Activated B cell treated with CpG ODN at 0.5 μM for 24 hours (primary cell): ENCODE measurements at regions of chr12 and their contacts with region 1.

Region 1: DNA sequence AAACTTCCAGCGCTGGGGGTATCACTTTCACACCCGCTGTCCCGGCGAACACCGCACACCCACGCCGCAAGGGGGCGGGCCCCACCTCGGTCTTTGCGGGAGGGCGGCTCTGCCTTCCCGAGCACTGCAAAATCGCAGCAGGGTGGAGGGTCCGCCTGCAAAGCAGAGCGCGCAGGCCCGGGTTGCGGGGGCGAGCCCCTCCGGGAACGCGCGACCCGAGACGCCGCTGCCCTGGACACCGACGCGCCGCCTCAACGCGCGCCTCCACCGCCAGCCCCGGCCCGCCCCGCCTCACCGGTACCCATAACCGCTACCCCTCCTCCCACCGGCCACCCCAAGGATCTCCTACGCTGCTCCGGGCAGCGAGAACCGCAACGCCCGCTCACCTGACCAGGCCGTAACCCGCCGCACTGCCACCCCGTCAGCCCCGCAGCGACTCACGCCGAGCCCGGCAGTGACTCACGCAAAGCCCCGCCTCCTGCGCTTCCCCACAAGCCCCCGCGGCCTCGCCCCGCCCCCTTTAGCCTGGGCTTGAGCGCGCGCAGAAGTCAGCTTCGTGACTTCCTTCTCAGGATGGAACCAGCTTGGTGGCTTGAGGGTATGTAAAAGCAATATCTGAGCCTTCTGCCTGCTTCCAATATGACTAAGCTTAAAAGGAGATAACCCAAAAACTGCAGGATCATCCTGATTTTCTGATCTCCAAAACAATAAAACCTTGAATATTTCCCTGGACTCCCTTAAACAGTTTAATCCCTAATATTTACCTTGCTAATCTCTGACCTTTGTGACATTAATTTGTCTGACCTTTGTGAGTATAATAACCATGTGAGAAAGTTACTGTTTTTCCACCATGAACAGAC is at the start of gene RPAP3:
- DNase-seq: peak; percentile 96
- ATAC-seq: peak; percentile 90
- H3K4me3 Mint-ChIP-seq: peak within 1 kb of the TSS; percentile 97
- H3K27ac Mint-ChIP-seq: peak within 1 kb of the TSS; percentile 98
- H3K4me1 Mint-ChIP-seq: peaks cover 76% of the 10 kb centered on the region
- H3K27me3 Mint-ChIP-seq: no peaks in the 10 kb centered on the region
- CTCF ChIP-seq: no peak
- total RNA-seq, gene RPAP3: 58.4 and 60.5 TPM in 2 replicates

Region 2: DNA sequence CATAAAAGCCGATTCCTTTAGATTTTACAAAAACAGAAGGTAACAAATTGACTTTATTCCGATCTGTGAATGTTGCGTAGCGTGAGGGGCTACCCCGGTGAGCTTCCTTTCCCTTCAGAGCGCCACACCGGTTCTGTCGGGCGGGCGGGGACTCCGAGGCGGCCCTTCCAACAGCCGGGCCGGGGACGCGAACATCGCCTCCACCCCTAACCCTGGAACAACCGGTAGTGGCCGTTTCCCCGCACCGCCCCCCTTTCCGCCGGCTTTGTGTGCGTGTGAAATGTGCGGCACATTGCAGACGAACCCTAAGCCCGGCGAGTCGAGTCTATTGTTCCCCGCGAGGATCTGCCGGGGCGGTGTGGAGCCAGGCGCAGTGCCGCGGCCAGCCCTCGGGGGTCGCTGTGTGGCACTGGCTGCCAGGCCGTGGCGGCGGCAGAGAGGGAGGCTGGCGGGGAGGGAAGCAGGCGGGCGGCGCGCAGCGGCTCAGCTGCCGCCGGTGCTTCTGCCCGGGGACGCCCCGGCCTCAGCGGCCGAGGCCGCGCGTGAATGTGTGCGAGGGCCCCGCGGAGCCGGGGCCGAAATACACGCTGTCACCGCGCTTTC is 1977.1 kb before region 1 on chr12:
- CTCF ChIA-PET with region 1: no interaction called
- POLR2A ChIA-PET with region 1: no interaction called
- intact Hi-C with region 1: loop called (anchors 5 kb)
- DNase-seq: peak; percentile 97
- ATAC-seq: peak; percentile 68
- H3K4me3 Mint-ChIP-seq: peak overlapping the region; percentile 92
- H3K27ac Mint-ChIP-seq: peak overlapping the region; percentile 99
- H3K4me1 Mint-ChIP-seq: peaks cover 41% of the 10 kb centered on the region
- H3K27me3 Mint-ChIP-seq: no peaks in the 10 kb centered on the region
- CTCF ChIP-seq: peak; percentile 60

Region 3: DNA sequence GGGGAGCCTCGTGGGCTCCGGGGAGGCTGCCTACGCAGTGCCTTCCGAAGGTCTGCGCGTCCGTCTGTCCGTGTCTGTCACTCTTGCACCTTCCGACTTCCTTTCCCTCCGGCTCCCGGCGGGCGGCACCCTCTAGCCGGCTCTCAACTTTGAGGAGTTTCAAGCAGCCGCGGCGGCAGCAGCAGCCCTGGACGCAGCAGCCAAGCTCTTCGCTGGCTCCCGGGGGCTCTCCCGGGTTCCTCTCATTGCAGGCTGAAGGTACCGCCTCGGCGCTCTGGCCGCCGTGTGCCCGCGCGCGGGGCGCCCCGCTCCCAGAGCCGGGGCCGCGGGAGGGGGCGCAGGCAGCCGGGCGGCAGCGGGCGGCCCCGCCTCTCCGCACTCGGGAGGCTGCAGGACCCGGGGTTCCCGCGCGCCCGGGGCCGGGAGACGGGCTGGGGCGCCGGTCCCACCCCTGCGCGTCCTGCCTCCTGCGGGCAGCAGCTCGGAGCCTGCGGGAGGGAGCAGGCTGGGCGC is 626.3 kb before region 1 on chr12 and contains the starts of genes AMIGO2 and PCED1B:
- CTCF ChIA-PET with region 1: no interaction called
- POLR2A ChIA-PET with region 1: interaction called, 3 read pairs
- intact Hi-C with region 1: loop called (anchors 5 kb)
- DNase-seq: no peak
- ATAC-seq: peak; percentile 47
- H3K4me3 Mint-ChIP-seq: peak within 1 kb of the TSS; percentile 99
- H3K27ac Mint-ChIP-seq: peak within 1 kb of the TSS; percentile 95
- H3K4me1 Mint-ChIP-seq: peaks cover 67% of the 10 kb centered on the region
- H3K27me3 Mint-ChIP-seq: no peaks in the 10 kb centered on the region
- CTCF ChIP-seq: no peak
- total RNA-seq, gene AMIGO2: 13.9 and 14.1 TPM in 2 replicates
- total RNA-seq, gene PCED1B: 60.9 and 65.4 TPM in 2 replicates

Region 4: DNA sequence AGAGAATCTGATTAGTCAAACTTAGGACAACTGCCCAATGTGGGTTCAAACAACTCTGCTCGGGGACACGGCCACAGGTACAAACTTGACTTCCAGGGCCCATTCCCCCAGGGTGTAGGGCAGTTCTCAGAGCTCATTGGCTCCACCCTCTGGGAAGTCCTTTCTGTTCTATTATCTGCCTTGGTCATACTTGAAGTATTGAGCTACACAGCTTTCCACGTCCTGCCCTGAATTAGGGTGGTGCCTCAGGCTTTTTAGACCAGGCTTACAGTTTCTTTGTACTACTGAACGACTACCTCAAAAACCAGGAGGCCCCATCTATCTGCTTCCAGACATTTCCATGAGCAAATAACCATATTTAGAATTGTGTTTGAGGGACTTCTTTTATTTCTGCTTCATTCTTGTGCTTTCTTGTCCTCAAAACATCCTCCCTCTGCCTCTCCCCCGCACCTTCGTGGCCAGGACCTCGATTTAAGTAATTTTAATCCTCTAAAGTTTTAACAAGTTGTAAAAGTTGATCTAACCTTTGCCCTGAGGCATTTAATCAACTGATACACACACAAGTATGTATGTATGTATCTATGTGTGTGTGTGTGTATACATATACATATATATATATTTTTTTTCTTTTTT is 344.3 kb before region 1 on chr12:
- CTCF ChIA-PET with region 1: no interaction called
- POLR2A ChIA-PET with region 1: no interaction called
- intact Hi-C with region 1: loop called (anchors 1 kb)
- DNase-seq: no peak
- ATAC-seq: peak; percentile 68
- H3K4me3 Mint-ChIP-seq: peak overlapping the region; percentile 74
- H3K27ac Mint-ChIP-seq: peak overlapping the region; percentile 94
- H3K4me1 Mint-ChIP-seq: peaks cover 63% of the 10 kb centered on the region
- H3K27me3 Mint-ChIP-seq: no peaks in the 10 kb centered on the region
- CTCF ChIP-seq: no peak

Region 5: DNA sequence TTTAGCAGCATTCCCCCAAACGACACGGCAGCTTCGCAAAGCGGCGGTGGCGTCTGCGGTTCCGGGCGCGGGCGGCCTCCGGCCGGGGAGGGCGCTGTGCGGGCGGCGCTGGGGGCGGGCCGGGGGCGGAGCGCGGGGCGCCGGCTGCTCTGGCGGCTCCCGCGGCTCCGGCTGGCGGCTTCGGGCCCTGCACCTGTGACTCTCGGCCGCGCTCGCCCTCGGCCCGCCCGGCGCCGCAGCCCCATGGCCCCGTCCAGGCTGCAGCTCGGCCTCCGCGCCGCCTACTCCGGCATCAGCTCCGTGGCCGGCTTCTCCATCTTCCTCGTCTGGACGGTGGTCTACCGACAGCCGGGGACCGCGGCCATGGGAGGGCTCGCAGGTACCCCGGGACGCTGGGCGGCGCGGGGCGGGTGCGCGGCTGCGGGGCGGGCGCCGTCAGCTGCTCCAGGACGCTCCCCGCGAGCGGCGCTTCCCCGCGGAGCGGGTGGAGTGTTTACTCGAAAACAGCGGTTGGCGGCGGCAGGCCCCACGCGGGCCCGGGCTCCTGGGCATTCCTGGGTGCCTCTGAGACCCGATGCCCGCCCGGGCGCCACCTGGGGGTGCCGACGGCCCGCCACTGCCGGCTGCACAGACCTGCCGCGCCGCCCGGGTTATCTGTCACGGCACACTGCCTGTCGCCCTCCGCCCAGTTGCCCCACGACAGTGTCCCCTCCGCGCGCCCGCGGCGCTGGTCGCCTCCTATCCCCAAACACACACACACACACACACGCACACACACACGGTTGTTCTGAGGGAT is 67.5 kb after region 1 on chr12 and contains the start of gene SLC48A1:
- CTCF ChIA-PET with region 1: interaction called, 16 read pairs
- POLR2A ChIA-PET with region 1: interaction called, 13 read pairs
- intact Hi-C with region 1: no loop called
- DNase-seq: peak; percentile 82
- ATAC-seq: peak; percentile 94
- H3K4me3 Mint-ChIP-seq: peak within 1 kb of the TSS; percentile 87
- H3K27ac Mint-ChIP-seq: peak within 1 kb of the TSS; percentile 69
- H3K4me1 Mint-ChIP-seq: peaks cover 18% of the 10 kb centered on the region
- H3K27me3 Mint-ChIP-seq: no peaks in the 10 kb centered on the region
- CTCF ChIP-seq: no peak
- total RNA-seq, gene SLC48A1: 12.7 and 12.8 TPM in 2 replicates

Region 6: GRCh38 chr12:47850153-47851084 is 144.6 kb after region 1 on chr12:
- CTCF ChIA-PET with region 1: no interaction called
- POLR2A ChIA-PET with region 1: no interaction called
- intact Hi-C with region 1: no loop called
- DNase-seq: no peak
- ATAC-seq: no peak
- H3K4me3 Mint-ChIP-seq: no peak overlapping the region
- H3K27ac Mint-ChIP-seq: no peak overlapping the region
- H3K4me1 Mint-ChIP-seq: no peaks in the 10 kb centered on the region
- H3K27me3 Mint-ChIP-seq: no peaks in the 10 kb centered on the region
- CTCF ChIP-seq: no peak

Region 7: DNA sequence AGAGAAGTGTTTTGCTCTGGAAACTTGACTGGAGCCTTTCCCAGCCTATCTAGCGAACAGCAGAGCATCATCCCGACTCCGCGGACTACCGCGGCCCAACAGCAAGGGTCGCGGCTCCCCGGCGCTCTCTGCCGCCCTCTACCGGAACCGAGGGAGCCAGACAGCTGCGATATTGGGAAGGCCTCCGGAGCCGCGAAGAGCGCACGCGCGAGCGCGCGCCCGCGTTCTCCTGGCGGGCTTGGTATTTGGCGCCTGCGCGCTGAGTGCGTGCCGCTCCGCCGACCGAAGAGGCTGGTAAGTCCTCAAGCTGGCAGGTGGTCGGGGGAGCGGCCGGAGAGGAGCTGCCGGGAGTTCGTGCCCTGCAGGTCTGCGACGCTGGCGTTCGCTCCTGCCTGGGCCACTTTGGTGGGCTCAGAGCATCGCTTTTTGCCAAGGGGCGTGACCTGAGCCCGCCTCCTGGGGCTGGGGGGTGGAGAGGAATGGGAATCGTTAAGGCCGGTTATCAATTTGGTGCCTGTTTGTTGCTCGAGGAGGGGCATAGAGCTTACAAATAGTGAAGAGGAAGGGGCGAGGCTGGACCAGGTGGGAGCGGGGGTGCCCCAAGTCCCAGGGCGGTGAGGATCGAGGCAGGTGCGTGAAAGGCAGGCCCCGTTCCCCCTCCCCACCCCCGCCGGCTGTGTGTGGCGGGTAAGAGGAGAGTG is 257.7 kb after region 1 on chr12 and contains the start of gene TMEM106C:
- CTCF ChIA-PET with region 1: no interaction called
- POLR2A ChIA-PET with region 1: no interaction called
- intact Hi-C with region 1: loop called (anchors 1 kb)
- DNase-seq: peak; percentile 89
- ATAC-seq: peak; percentile 96
- H3K4me3 Mint-ChIP-seq: peak within 1 kb of the TSS; percentile 97
- H3K27ac Mint-ChIP-seq: peak within 1 kb of the TSS; percentile 86
- H3K4me1 Mint-ChIP-seq: peaks cover 18% of the 10 kb centered on the region
- H3K27me3 Mint-ChIP-seq: peaks cover 11% of the 10 kb centered on the region
- CTCF ChIP-seq: peak; percentile 37
- total RNA-seq, gene TMEM106C: 24.5 and 31.3 TPM in 2 replicates